ENCODE measurements at regions of chr6 and their contacts with region 1.

Region 1: GRCh38 chr6:16332175-16332542 is 93.8 kb downstream of the GMPR start:
- DNase-seq: peak; percentile 83
- H3K4me3 ChIP-seq: no peak overlapping the region
- H3K27ac ChIP-seq: peak overlapping the region in 1 of 2 donors; percentile 41
- H3K4me1 ChIP-seq: no peaks in the 10 kb centered on the region
- H3K27me3 ChIP-seq: no peaks in the 10 kb centered on the region
- CTCF ChIP-seq: peak; percentile 84 to 96 (median 92)
- POLR2A ChIP-seq: no peak

Region 2: GRCh38 chr6:15800841-15801617 is 531.1 kb before region 1 on chr6:
- intact Hi-C with region 1: no loop called
- DNase-seq: no peak
- H3K4me3 ChIP-seq: no peak overlapping the region
- H3K27ac ChIP-seq: no peak overlapping the region
- H3K4me1 ChIP-seq: no peaks in the 10 kb centered on the region
- H3K27me3 ChIP-seq: no peaks in the 10 kb centered on the region
- CTCF ChIP-seq: no peak
- POLR2A ChIP-seq: no peak

Region 3: GRCh38 chr6:16089232-16090062 is 242.7 kb before region 1 on chr6:
- intact Hi-C with region 1: no loop called
- DNase-seq: no peak
- H3K4me3 ChIP-seq: no peak overlapping the region
- H3K27ac ChIP-seq: no peak overlapping the region
- H3K4me1 ChIP-seq: no peaks in the 10 kb centered on the region
- H3K27me3 ChIP-seq: no peaks in the 10 kb centered on the region
- CTCF ChIP-seq: no peak
- POLR2A ChIP-seq: no peak

Region 4: GRCh38 chr6:16438718-16439591 is 106.8 kb after region 1 on chr6:
- intact Hi-C with region 1: no loop called
- DNase-seq: no peak
- H3K4me3 ChIP-seq: no peak overlapping the region
- H3K27ac ChIP-seq: no peak overlapping the region
- H3K4me1 ChIP-seq: no peaks in the 10 kb centered on the region
- H3K27me3 ChIP-seq: no peaks in the 10 kb centered on the region
- CTCF ChIP-seq: no peak
- POLR2A ChIP-seq: no peak

Region 5: GRCh38 chr6:16503970-16504415 is 171.8 kb after region 1 on chr6:
- intact Hi-C with region 1: loop called (anchors 10 kb)
- DNase-seq: no peak
- H3K4me3 ChIP-seq: no peak overlapping the region
- H3K27ac ChIP-seq: no peak overlapping the region
- H3K4me1 ChIP-seq: no peaks in the 10 kb centered on the region
- H3K27me3 ChIP-seq: no peaks in the 10 kb centered on the region
- CTCF ChIP-seq: no peak
- POLR2A ChIP-seq: no peak